Stomach (tissue), 19 donors: ENCODE measurements at regions of chr17 and their contacts with region 1.

Region 1: GRCh38 chr17:1365445-1366039 is 34.5 kb downstream of the YWHAE start:
- DNase-seq: peak; percentile 63 to 92
- H3K4me3 ChIP-seq: no peak overlapping the region
- H3K27ac ChIP-seq: peak overlapping the region in 3 of 5 donors; percentile 30 to 65 (median 65)
- H3K4me1 ChIP-seq: peaks cover 43 to 98% (median 72%) of the 10 kb centered on the region in 4 donors
- H3K27me3 ChIP-seq: no peaks in the 10 kb centered on the region
- CTCF ChIP-seq: peak in 5 of 7 experiments; percentile 68 to 88 (median 83)
- EP300 ChIP-seq: no peak
- POLR2A ChIP-seq: no peak

Region 2: GRCh38 chr17:1467898-1468492 is 102.5 kb after region 1 on chr17:
- intact Hi-C with region 1: no loop called
- DNase-seq: peak in 1 of 2 donors; percentile 83
- H3K4me3 ChIP-seq: no peak overlapping the region
- H3K27ac ChIP-seq: peak overlapping the region in 3 of 5 donors; percentile 11 to 55 (median 14)
- H3K4me1 ChIP-seq: peaks cover 0 to 25% (median 6%) of the 10 kb centered on the region in 4 donors
- H3K27me3 ChIP-seq: no peaks in the 10 kb centered on the region
- CTCF ChIP-seq: no peak
- EP300 ChIP-seq: no peak
- POLR2A ChIP-seq: no peak

Region 3: GRCh38 chr17:1516388-1517161 is 151.0 kb after region 1 on chr17 and contains the start of gene INPP5K:
- intact Hi-C with region 1: loop called (anchors 10 kb)
- DNase-seq: peak; percentile 99 to 100
- H3K4me3 ChIP-seq: peak within 1 kb of the TSS; percentile 83 to 94 (median 92)
- H3K27ac ChIP-seq: peak within 1 kb of the TSS; percentile 93 to 97 (median 94)
- H3K4me1 ChIP-seq: peaks cover 34 to 60% (median 56%) of the 10 kb centered on the region in 4 donors
- H3K27me3 ChIP-seq: no peaks in the 10 kb centered on the region
- CTCF ChIP-seq: peak in 1 of 7 experiments; percentile 16
- EP300 ChIP-seq: no peak
- POLR2A ChIP-seq: peak in 2 of 4 donors; percentile 27 to 60
- total RNA-seq, gene INPP5K: 38.0 to 97.6 (median 93.4) TPM